Activated CD4-positive, alpha-beta memory T cell treated with anti-CD3 and anti-CD28 coated beads for 36 hours (primary cell): ENCODE measurements at regions of chr12 and their contacts with region 1.

Region 1: DNA sequence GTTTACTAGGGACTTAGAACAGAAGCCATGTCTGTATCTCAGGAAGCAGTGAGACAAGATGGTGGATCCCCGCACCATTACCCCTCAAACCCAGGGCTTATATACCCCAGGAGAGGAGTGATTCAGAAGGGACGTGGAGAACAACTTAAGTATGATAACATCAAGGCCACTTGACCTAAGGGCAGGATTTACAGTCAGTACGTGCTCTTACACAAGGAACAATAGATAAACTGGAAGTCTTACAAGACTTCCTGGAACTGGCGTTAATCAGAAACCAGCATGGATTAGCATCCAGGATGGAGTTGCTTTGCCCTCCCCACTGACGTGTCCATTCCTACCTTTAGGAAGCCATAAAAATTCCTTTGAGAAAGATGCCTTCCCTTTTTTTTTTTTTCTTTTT is 8.6 kb upstream of the ETFBKMT start:
- DNase-seq: no peak
- H3K4me3 Mint-ChIP-seq: no peak overlapping the region
- H3K27ac Mint-ChIP-seq: no peak overlapping the region
- H3K4me1 Mint-ChIP-seq: peaks cover 11% of the 10 kb centered on the region
- H3K27me3 Mint-ChIP-seq: no peaks in the 10 kb centered on the region

Region 2: DNA sequence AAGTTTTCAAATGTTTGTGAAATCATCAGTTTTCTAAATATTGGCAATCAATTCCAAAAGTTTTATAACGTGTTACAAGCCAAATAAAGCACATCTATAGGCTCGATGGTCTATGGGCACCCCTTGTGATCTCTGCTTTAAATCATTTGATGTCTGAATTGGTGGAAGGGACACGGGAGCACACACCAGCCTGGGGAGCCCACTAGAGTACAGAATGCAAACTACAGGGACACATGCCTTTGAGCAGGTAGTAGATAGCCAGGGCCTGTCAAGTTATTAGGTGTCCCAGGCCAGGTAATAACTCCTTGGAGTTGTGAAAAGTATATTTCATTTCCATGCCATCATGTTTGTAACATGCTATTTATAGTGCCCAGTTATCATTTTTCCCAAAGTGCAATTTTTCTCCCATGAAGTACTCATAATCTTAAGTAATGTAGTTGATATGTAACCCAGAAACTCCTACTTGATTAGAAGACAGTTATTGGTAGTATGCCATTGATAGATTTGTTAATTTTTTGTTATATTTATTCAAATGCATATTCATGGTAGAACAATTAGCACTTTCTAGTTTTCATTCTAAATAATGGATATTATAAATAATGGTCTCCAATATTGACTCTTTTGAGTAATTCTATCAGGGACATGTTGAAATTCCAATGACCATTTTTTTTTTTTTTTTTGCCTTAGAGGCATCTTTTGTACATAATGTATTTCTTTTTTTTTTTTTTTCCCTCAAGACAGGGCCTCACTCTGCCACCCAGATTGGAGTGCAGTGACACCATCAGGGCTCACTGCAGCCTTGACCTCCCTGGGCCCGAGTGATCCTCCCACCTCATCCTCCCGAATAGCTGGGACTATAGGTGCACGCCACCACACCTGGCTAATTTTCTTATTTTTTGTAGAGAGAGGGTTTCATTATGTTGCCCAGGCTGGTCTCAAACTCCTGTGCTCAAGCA is 651.6 kb after region 1 on chr12:
- CTCF ChIA-PET with region 1: interaction called, 17 read pairs
- POLR2A ChIA-PET with region 1: no interaction called
- intact Hi-C with region 1: loop called (anchors 1 kb)
- DNase-seq: no peak
- H3K4me3 Mint-ChIP-seq: no peak overlapping the region
- H3K27ac Mint-ChIP-seq: no peak overlapping the region
- H3K4me1 Mint-ChIP-seq: no peaks in the 10 kb centered on the region
- H3K27me3 Mint-ChIP-seq: no peaks in the 10 kb centered on the region

Region 3: DNA sequence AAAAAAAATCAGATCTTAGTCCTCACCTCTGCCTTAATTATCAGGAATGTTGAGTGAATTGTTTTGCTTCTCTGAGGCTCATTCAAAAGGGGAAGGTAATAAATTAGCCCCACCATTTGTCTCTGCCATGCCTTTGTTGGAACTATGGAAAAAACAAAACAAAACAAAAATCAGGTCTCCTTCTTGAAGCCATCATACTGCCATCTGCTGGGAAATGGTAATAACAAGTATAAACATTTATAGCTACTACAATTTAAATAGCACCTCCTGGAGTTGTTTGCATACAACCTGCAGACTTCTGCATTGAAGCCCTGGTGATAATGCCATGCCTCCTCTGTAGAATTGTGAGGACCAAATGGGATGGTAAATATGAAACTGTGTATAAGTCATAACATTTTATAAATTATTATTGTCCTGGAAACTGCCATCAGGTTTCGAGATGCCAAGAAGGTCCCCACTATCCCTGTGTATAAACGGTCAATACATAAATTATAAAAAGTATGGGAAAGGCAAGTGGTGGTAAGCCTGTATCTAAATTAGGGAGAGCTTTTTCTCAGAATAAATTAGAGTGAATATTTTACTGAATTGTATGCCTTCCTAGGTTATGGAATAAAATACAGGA is 661.2 kb after region 1 on chr12:
- CTCF ChIA-PET with region 1: interaction called, 49 read pairs
- POLR2A ChIA-PET with region 1: no interaction called
- intact Hi-C with region 1: loop called (anchors 1 kb)
- DNase-seq: no peak
- H3K4me3 Mint-ChIP-seq: no peak overlapping the region
- H3K27ac Mint-ChIP-seq: no peak overlapping the region
- H3K4me1 Mint-ChIP-seq: no peaks in the 10 kb centered on the region
- H3K27me3 Mint-ChIP-seq: no peaks in the 10 kb centered on the region